ENCODE measurements at regions of chr2 and their contacts with region 1.

Region 1: DNA sequence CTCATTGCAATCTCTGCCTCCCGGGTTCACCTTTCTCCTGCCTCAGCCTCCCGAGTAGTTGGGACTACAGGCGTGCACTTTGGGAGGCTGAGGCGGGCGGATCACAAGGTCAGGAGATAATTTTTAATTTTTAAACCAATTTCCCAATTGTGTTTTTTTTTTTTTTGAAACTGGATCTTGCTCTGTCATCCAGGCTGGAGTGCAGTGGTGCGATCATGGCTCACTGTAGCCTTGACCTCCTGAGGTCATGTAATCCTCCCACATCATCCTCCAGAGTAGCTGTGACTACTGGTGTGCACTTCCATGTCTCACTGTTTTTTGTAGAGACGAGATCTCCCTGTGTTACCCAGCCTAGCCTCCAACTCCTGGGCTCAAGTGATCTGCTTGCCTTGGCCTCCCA is 49.3 kb downstream of the GLS start:
- DNase-seq: no peak
- H3K4me3 ChIP-seq: no peak overlapping the region
- H3K4me3 Mint-ChIP-seq: no peak overlapping the region
- H3K27ac ChIP-seq: no peak overlapping the region
- H3K27ac Mint-ChIP-seq: peak overlapping the region in 2 of 7 donors; percentile 29 to 53
- H3K4me1 ChIP-seq: no peaks in the 10 kb centered on the region
- H3K4me1 Mint-ChIP-seq: peaks cover 3 to 7% (median 6%) of the 10 kb centered on the region in 4 donors
- H3K27me3 ChIP-seq: no peaks in the 10 kb centered on the region
- H3K27me3 Mint-ChIP-seq: no peaks in the 10 kb centered on the region

Region 2: DNA sequence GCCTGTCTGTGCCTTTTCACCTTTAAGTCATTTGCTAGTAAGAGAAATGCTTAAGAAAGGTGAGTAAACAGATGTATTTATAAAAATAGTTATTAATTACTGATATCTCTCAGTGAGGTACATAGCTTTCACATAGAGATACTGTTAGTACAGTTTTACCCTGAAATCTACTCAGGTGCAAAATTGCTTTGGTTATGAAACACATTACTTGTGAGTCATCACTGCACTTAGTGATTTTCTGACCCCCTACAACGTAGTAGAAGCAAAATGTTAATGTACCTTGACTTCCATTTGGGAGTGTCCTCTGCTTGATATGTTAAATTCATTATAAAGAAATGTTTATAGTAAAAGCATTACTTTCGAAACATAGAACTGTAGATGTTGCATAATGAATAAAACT is 42.8 kb before region 1 on chr2:
- CTCF ChIA-PET with region 1: no interaction called
- POLR2A ChIA-PET with region 1: no interaction called
- intact Hi-C with region 1: loop called (anchors 5 kb)
- DNase-seq: no peak
- H3K4me3 ChIP-seq: no peak overlapping the region
- H3K4me3 Mint-ChIP-seq: peak overlapping the region in 4 of 8 donors; percentile 57 to 79 (median 76)
- H3K27ac ChIP-seq: no peak overlapping the region
- H3K27ac Mint-ChIP-seq: peak overlapping the region in 2 of 7 donors; percentile 12 to 77
- H3K4me1 ChIP-seq: peaks cover 92% of the 10 kb centered on the region
- H3K4me1 Mint-ChIP-seq: peaks cover 53 to 85% (median 71%) of the 10 kb centered on the region in 4 donors
- H3K27me3 ChIP-seq: no peaks in the 10 kb centered on the region
- H3K27me3 Mint-ChIP-seq: no peaks in the 10 kb centered on the region

Region 3: GRCh38 chr2:190961918-190962487 is 32.1 kb after region 1 on chr2:
- CTCF ChIA-PET with region 1: no interaction called
- POLR2A ChIA-PET with region 1: no interaction called
- intact Hi-C with region 1: loop called (anchors 5 kb)
- DNase-seq: no peak
- H3K4me3 ChIP-seq: no peak overlapping the region
- H3K4me3 Mint-ChIP-seq: no peak overlapping the region
- H3K27ac ChIP-seq: no peak overlapping the region
- H3K27ac Mint-ChIP-seq: peak overlapping the region in 5 of 7 donors; percentile 7 to 87 (median 42)
- H3K4me1 ChIP-seq: no peaks in the 10 kb centered on the region
- H3K4me1 Mint-ChIP-seq: peaks cover 24 to 44% (median 34%) of the 10 kb centered on the region in 4 donors
- H3K27me3 ChIP-seq: no peaks in the 10 kb centered on the region
- H3K27me3 Mint-ChIP-seq: no peaks in the 10 kb centered on the region

Region 4: DNA sequence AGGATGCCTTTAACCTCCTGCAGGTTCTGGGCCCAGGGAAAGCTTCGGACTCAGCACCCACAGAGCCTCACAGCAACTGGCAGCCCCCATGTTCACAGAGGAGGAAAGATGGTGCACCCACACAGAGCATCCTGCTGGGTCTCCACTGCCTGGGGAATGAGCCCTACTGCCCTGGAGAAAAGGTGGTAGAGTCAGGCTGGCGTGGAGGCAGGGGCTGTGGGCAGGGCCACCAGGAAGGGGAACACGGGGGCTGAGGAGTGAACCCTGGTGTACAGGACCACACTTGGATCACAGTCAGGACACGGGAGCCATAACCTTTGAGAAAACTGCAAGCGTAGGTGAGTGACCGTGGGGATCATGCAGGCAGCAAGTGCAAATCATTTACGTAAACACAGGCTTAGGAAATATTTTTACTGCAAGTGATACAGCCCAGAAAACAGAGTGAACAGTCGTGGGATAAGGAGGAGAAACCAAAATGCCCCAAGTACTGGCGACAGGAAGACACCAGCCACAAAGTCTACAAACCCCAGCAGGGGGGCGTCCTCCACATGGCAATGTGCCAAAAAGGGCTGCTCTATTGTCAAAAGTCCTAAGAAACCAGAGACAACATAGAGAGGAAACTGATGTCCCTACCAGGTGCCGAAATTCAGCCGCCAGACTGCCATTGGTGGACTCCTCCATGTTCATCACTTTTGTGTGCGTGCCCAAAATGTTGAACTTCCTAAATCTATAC is 56.5 kb after region 1 on chr2:
- CTCF ChIA-PET with region 1: no interaction called
- POLR2A ChIA-PET with region 1: no interaction called
- intact Hi-C with region 1: no loop called
- DNase-seq: no peak
- H3K4me3 ChIP-seq: no peak overlapping the region
- H3K4me3 Mint-ChIP-seq: no peak overlapping the region
- H3K27ac ChIP-seq: no peak overlapping the region
- H3K27ac Mint-ChIP-seq: peak overlapping the region in 5 of 7 donors; percentile 46 to 75 (median 66)
- H3K4me1 ChIP-seq: peaks cover 13% of the 10 kb centered on the region
- H3K4me1 Mint-ChIP-seq: peaks cover 14 to 30% (median 21%) of the 10 kb centered on the region in 4 donors
- H3K27me3 ChIP-seq: no peaks in the 10 kb centered on the region
- H3K27me3 Mint-ChIP-seq: no peaks in the 10 kb centered on the region

Measured in CD4-positive, alpha-beta memory T cell (primary cell).